ENCODE measurements at regions of chr12 and their contacts with region 1.

Region 1: DNA sequence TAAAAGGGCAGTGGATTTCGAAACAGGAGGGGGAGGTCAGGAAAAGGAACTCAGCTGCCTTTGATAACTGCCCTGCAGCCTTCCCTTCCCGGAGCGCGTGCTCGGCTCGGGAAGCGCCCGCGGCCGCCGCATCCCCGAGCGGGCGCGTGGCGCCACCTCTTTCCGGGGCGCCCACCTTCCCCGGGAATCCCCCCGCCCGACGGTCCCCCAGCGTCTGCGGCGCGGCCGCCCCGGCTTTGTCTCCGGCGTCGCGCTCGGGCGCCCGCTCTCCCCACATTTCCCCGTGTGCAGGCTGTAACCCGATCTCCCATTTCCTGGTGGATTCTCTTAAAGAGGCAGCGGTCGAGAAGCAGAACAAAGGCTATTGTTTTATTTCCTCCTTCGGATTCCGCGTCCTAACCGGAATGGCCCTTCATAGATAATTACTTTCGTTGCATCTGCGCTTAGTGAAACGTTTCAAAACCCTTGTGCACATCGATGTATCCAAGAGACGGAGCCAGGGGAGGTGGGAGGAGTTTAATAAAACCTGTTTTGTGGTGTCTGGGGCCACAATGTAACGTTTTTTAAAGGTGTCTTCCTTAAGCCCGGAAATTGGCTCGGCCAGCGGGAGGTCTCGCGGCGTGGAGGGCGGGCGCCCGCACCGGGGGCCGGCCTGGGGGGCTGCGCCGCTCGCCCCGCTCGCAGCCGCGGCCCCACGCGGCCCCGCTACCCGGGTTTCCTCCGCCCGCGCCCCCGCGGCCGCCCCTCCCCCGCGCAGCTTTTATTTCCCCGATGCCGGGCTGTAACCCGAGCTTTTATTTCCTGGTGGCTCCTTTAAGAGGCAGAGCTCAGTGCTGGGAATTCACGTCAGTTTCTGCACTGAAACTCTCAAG is at the start of gene ETV6:
- DNase-seq: peak; percentile 89
- H3K4me3 ChIP-seq: peak within 1 kb of the TSS; percentile 92
- H3K27ac ChIP-seq: peak within 1 kb of the TSS; percentile 79
- H3K4me1 ChIP-seq: peaks cover 26% of the 10 kb centered on the region
- CTCF ChIP-seq: no peak
- total RNA-seq, gene ETV6: 17.2 and 19.3 TPM in 2 replicates

Region 2: GRCh38 chr12:11581179-11581755 is 67.8 kb before region 1 on chr12:
- CTCF ChIA-PET with region 1: no interaction called
- POLR2A ChIA-PET with region 1: no interaction called
- intact Hi-C with region 1: loop called (anchors 1 kb)
- DNase-seq: peak; percentile 86
- H3K4me3 ChIP-seq: no peak overlapping the region
- H3K27ac ChIP-seq: no peak overlapping the region
- H3K4me1 ChIP-seq: peaks cover 29% of the 10 kb centered on the region
- CTCF ChIP-seq: peak; percentile 82

Region 3: GRCh38 chr12:11785712-11786111 is 136.6 kb after region 1 on chr12:
- CTCF ChIA-PET with region 1: no interaction called
- POLR2A ChIA-PET with region 1: no interaction called
- intact Hi-C with region 1: no loop called
- DNase-seq: no peak
- H3K4me3 ChIP-seq: no peak overlapping the region
- H3K27ac ChIP-seq: no peak overlapping the region
- H3K4me1 ChIP-seq: peaks cover 65% of the 10 kb centered on the region
- CTCF ChIP-seq: no peak

Region 4: DNA sequence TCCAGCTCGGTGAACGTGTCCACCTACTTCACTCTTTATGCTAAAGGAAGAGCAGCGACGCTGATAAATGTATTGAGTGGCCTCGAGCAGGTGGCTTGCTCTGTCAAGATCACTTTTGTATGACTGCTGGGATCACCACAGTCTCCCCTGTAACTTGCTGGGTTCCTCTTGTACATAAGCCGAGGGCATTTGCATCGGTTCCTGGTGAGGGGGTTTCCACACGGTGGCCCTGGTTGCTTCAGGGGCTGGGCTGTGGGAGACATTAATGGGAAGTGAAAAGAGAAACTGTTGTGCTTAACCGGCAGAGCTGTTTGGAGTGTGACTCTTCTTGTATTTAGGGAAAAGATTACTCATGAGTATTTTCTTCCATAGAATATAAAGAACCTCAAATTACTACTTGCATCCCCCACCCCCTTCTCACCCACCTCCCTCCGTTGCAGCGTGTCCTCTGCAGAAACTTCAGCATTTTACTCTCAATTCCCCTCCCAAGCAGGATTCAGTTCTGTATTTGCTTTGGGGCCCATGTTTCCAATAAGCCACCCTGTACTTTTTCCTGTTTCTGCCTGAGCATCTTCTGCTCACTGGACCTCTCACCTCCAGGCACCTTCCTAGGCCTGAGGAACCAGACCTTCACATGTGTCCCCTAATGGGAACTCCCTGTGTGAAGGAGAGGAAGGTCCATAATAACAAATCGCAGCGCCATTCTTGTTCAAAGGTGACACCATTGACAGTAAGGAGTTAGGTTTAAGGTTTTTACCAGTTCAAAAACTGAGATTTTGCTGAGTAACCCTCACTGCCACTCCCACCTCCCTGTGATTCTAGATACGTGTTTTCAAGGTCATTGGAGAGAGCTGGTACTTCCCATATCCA is 187.4 kb after region 1 on chr12:
- CTCF ChIA-PET with region 1: no interaction called
- POLR2A ChIA-PET with region 1: no interaction called
- intact Hi-C with region 1: loop called (anchors 2 kb)
- DNase-seq: peak; percentile 95
- H3K4me3 ChIP-seq: peak overlapping the region; percentile 37
- H3K27ac ChIP-seq: peak overlapping the region; percentile 91
- H3K4me1 ChIP-seq: peaks cover 72% of the 10 kb centered on the region
- CTCF ChIP-seq: 0 out of 2 replicates have a peak, but pooled peaks have one; percentile 8

Region 5: GRCh38 chr12:12024911-12025682 is 376.0 kb after region 1 on chr12:
- CTCF ChIA-PET with region 1: no interaction called
- POLR2A ChIA-PET with region 1: no interaction called
- intact Hi-C with region 1: loop called (anchors 2 kb)
- DNase-seq: peak; percentile 91
- H3K4me3 ChIP-seq: peak overlapping the region; percentile 58
- H3K27ac ChIP-seq: peak overlapping the region; percentile 94
- H3K4me1 ChIP-seq: peaks cover 80% of the 10 kb centered on the region
- CTCF ChIP-seq: no peak

Region 6: GRCh38 chr12:12356886-12357718 is 708.0 kb after region 1 on chr12 and contains the start of gene BORCS5:
- CTCF ChIA-PET with region 1: no interaction called
- POLR2A ChIA-PET with region 1: no interaction called
- intact Hi-C with region 1: loop called (anchors 2 kb)
- DNase-seq: peak; percentile 99
- H3K4me3 ChIP-seq: peak within 1 kb of the TSS; percentile 81
- H3K27ac ChIP-seq: peak within 1 kb of the TSS; percentile 82
- H3K4me1 ChIP-seq: peaks cover 18% of the 10 kb centered on the region
- CTCF ChIP-seq: peak; percentile 55
- total RNA-seq, gene BORCS5: 9.6 and 10.4 TPM in 2 replicates

Measured in OCI-LY7 (cell line).